Sciatic nerve (tissue), 2 donors: ENCODE measurements at regions of chr19 and their contacts with region 1.

Region 1: DNA sequence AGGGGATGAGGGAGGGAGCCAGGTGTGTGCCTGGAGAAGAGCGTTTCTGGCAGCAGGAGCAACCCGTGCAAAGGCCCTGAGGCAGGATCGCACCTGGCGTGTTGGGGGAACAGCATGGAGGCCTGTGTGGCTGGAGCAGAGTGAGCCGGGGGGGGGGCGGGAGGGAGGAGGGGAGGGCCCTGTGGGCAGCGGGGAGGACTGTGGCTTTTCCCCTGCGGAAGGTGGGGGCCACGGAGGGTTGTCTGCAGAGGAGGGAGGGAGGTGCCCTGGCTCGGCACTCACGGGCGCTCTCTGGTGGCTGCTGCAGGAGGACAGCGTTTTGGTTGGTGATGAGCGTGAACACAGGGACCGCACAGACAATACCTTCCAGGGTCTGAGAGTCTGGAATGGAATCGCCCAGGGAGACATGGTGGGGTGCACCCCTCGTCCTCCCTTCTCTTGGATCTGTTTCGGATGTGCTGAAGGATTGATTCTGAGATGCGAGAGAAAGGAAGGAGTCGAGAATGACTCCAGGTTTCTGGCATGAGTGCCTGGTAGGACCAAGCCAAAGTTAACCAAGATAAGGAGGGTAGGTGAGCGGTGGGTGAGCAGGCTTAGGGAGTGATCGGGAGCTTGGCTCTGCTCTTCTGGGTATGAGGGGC is 6.5 kb downstream of the RAB11B start:
- DNase-seq: peak; percentile 81
- ATAC-seq: peak; percentile 54

Region 2: GRCh38 chr19:7382694-7383093 is 1014.0 kb before region 1 on chr19:
- intact Hi-C with region 1: loop called (anchors 5 kb)
- DNase-seq: no peak
- ATAC-seq: no peak

Region 3: DNA sequence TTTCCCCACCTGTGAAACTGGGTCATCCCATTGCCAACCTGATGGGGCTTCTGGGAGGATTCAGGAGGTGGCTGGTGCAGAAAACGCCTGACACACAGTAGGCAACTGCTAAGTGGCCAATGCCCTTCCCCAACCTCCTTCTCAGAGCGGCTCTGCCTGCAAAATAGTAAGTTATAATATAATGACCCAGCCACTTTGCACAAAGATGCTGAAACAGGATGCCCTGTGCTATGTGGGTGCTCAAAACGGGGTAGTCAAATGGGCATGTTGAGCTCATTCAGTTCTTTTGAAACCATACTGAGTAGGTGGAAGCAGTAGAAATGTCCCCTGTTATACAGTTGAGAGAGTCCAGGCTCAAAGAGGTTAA is 16.9 kb after region 1 on chr19:
- intact Hi-C with region 1: no loop called
- DNase-seq: no peak
- ATAC-seq: no peak